ENCODE measurements at regions of chr9 and their contacts with region 1.

Region 1: GRCh38 chr9:69056191-69056815 is 20.8 kb downstream of the FXN start:
- DNase-seq: no peak
- ATAC-seq: no peak
- H3K4me3 ChIP-seq: no peak overlapping the region
- H3K4me3 Mint-ChIP-seq: no peak overlapping the region
- H3K27ac ChIP-seq: no peak overlapping the region
- H3K27ac Mint-ChIP-seq: no peak overlapping the region
- H3K4me1 ChIP-seq: no peaks in the 10 kb centered on the region
- H3K4me1 Mint-ChIP-seq: no peaks in the 10 kb centered on the region
- H3K27me3 ChIP-seq: no peaks in the 10 kb centered on the region
- H3K27me3 Mint-ChIP-seq: no peaks in the 10 kb centered on the region
- CTCF ChIP-seq: no peak

Region 2: DNA sequence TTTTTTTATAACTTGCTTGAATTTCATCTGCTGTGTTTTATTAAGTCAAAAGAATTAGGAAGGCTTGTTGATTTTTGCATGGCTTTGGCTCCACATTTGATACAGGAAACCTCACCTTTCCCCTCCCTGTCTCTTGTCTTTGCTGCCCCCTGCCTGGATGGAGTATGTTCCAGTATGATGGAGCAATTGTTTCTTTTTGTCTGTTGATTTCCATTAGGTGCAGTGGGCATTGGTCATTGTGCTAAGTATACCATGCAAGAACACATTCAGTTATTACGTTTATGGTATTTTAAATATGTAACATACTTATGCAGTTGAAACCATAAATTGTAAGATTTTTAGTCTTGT is 137.4 kb after region 1 on chr9:
- CTCF ChIA-PET with region 1: interaction called, 20 read pairs
- POLR2A ChIA-PET with region 1: interaction called, 4 read pairs
- intact Hi-C with region 1: loop called (anchors 1 kb)
- DNase-seq: no peak
- ATAC-seq: no peak
- H3K4me3 ChIP-seq: no peak overlapping the region
- H3K4me3 Mint-ChIP-seq: no peak overlapping the region
- H3K27ac ChIP-seq: no peak overlapping the region
- H3K27ac Mint-ChIP-seq: no peak overlapping the region
- H3K4me1 ChIP-seq: peaks cover 3% of the 10 kb centered on the region
- H3K4me1 Mint-ChIP-seq: peaks cover 27% of the 10 kb centered on the region
- H3K27me3 ChIP-seq: no peaks in the 10 kb centered on the region
- H3K27me3 Mint-ChIP-seq: no peaks in the 10 kb centered on the region
- CTCF ChIP-seq: no peak

Region 3: DNA sequence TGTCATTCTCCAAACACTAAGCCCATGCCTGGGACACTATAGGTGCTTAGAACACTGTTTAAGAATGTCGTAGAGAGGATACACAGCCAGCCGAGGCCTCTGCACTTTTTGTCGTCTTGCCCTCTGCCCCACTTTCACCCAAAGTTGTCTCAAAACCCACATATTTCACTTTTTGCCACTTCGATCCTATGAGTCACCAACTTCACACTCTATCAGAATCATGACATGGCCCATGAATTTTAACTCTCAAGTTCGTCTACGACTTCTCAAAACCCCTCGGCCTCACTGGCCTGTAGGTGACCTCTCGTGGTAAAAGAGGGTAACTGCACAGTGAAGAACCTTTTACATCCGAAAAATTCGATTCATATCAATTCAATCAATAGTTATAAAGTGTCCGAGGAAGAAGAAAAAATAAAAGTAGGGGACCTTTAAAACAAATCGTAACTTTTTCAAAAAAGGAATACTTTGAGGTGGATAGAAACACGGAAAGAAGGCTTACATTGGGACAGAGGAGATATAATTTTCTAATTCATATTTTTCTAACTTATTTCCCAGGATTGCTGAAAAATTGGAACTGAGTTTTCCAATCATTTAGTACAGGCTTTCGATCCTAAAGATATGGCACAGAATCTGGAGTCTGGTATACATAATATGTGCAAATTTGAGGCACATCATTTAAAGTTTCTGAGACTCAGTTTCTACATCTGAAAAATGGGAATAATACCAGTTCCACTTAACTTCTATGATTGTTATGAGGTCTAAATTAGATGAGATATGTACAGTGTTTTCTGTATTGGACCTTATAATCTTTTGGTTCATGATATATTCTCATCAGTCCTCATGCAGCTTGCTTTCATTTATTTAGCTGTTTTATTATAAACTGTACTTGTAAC is 493.3 kb after region 1 on chr9:
- CTCF ChIA-PET with region 1: no interaction called
- POLR2A ChIA-PET with region 1: no interaction called
- intact Hi-C with region 1: loop called (anchors 10 kb)
- DNase-seq: peak in 7 of 14 experiments; percentile 3 to 61 (median 9)
- ATAC-seq: peak; percentile 60
- H3K4me3 ChIP-seq: no peak overlapping the region
- H3K4me3 Mint-ChIP-seq: no peak overlapping the region
- H3K27ac ChIP-seq: no peak overlapping the region
- H3K27ac Mint-ChIP-seq: no peak overlapping the region
- H3K4me1 ChIP-seq: no peaks in the 10 kb centered on the region
- H3K4me1 Mint-ChIP-seq: no peaks in the 10 kb centered on the region
- H3K27me3 ChIP-seq: no peaks in the 10 kb centered on the region
- H3K27me3 Mint-ChIP-seq: peaks cover 22% of the 10 kb centered on the region
- CTCF ChIP-seq: peak; percentile 78

Region 4: GRCh38 chr9:69877854-69878514 is 821.7 kb after region 1 on chr9:
- CTCF ChIA-PET with region 1: no interaction called
- POLR2A ChIA-PET with region 1: no interaction called
- intact Hi-C with region 1: loop called (anchors 5 to 10 kb)
- DNase-seq: peak in 3 of 14 experiments; percentile 9 to 39 (median 27)
- ATAC-seq: no peak
- H3K4me3 ChIP-seq: no peak overlapping the region
- H3K4me3 Mint-ChIP-seq: no peak overlapping the region
- H3K27ac ChIP-seq: no peak overlapping the region
- H3K27ac Mint-ChIP-seq: no peak overlapping the region
- H3K4me1 ChIP-seq: no peaks in the 10 kb centered on the region
- H3K4me1 Mint-ChIP-seq: no peaks in the 10 kb centered on the region
- H3K27me3 ChIP-seq: no peaks in the 10 kb centered on the region
- H3K27me3 Mint-ChIP-seq: peaks cover 9% of the 10 kb centered on the region
- CTCF ChIP-seq: peak; percentile 56

Measured in CD4-positive, alpha-beta T cell (primary cell).